T-cell (primary cell): ENCODE measurements at regions of chr17 and their contacts with region 1.

Region 1: DNA sequence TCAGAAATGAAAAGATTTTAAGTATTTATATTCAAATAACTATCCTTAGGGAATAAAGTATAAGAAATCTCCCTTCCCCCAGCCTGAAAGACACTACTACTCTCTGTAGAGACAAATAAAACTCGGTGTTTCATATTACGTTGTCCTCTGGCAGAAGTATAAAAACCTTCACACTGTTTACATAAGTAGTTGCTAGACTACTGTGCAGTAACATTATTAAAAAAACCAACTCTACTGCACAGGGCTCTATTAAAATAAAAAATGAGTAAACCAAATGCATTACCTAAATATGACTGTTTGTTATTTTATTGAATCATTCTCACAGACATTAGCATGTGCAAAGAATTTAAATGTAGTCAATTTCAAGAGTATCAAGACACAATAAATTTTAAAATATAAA is 67.4 kb downstream of the MED13 start:
- DNase-seq: no peak
- ATAC-seq: no peak
- H3K4me3 ChIP-seq: no peak overlapping the region
- H3K4me3 Mint-ChIP-seq: no peak overlapping the region
- H3K27ac ChIP-seq: no peak overlapping the region
- H3K27ac Mint-ChIP-seq: no peak overlapping the region
- H3K4me1 ChIP-seq: no peaks in the 10 kb centered on the region
- H3K4me1 Mint-ChIP-seq: peaks cover 37 to 38% (median 38%) of the 10 kb centered on the region in 3 donors
- H3K27me3 ChIP-seq: no peaks in the 10 kb centered on the region
- H3K27me3 Mint-ChIP-seq: no peaks in the 10 kb centered on the region

Region 2: GRCh38 chr17:60685437-60685836 is 1312.2 kb before region 1 on chr17:
- CTCF ChIA-PET with region 1: no interaction called
- POLR2A ChIA-PET with region 1: interaction called in 1 of 2 experiments, 10 read pairs
- DNase-seq: no peak
- ATAC-seq: no peak
- H3K4me3 ChIP-seq: no peak overlapping the region
- H3K4me3 Mint-ChIP-seq: no peak overlapping the region
- H3K27ac ChIP-seq: no peak overlapping the region
- H3K27ac Mint-ChIP-seq: no peak overlapping the region
- H3K4me1 ChIP-seq: no peaks in the 10 kb centered on the region
- H3K4me1 Mint-ChIP-seq: no peaks in the 10 kb centered on the region
- H3K27me3 ChIP-seq: no peaks in the 10 kb centered on the region
- H3K27me3 Mint-ChIP-seq: no peaks in the 10 kb centered on the region

Region 3: GRCh38 chr17:61947367-61948078 is 50.1 kb before region 1 on chr17:
- CTCF ChIA-PET with region 1: interaction called in 1 of 2 experiments, 12 read pairs
- POLR2A ChIA-PET with region 1: no interaction called
- DNase-seq: no peak
- ATAC-seq: no peak
- H3K4me3 ChIP-seq: no peak overlapping the region
- H3K4me3 Mint-ChIP-seq: no peak overlapping the region
- H3K27ac ChIP-seq: no peak overlapping the region
- H3K27ac Mint-ChIP-seq: no peak overlapping the region
- H3K4me1 ChIP-seq: no peaks in the 10 kb centered on the region
- H3K4me1 Mint-ChIP-seq: no peaks in the 10 kb centered on the region
- H3K27me3 ChIP-seq: no peaks in the 10 kb centered on the region
- H3K27me3 Mint-ChIP-seq: no peaks in the 10 kb centered on the region